ENCODE measurements at regions of chr11 and their contacts with region 1.

Region 1: GRCh38 chr11:7353100-7353499 is 101.4 kb downstream of the SYT9 start:
- DNase-seq: no peak
- H3K27ac ChIP-seq: no peak overlapping the region
- CTCF ChIP-seq: no peak

Region 2: GRCh38 chr11:7364660-7365059 is 11.6 kb after region 1 on chr11:
- CTCF ChIA-PET with region 1: no interaction called
- POLR2A ChIA-PET with region 1: no interaction called
- DNase-seq: no peak
- H3K27ac ChIP-seq: no peak overlapping the region
- CTCF ChIP-seq: no peak

Region 3: GRCh38 chr11:7442588-7443215 is 89.6 kb after region 1 on chr11:
- CTCF ChIA-PET with region 1: interaction called, 15 read pairs
- POLR2A ChIA-PET with region 1: no interaction called
- DNase-seq: peak; percentile 65
- H3K27ac ChIP-seq: no peak overlapping the region
- CTCF ChIP-seq: peak; percentile 88

Measured in RWPE1 (cell line).